ENCODE measurements at regions of chr13 and their contacts with region 1.

Region 1: DNA sequence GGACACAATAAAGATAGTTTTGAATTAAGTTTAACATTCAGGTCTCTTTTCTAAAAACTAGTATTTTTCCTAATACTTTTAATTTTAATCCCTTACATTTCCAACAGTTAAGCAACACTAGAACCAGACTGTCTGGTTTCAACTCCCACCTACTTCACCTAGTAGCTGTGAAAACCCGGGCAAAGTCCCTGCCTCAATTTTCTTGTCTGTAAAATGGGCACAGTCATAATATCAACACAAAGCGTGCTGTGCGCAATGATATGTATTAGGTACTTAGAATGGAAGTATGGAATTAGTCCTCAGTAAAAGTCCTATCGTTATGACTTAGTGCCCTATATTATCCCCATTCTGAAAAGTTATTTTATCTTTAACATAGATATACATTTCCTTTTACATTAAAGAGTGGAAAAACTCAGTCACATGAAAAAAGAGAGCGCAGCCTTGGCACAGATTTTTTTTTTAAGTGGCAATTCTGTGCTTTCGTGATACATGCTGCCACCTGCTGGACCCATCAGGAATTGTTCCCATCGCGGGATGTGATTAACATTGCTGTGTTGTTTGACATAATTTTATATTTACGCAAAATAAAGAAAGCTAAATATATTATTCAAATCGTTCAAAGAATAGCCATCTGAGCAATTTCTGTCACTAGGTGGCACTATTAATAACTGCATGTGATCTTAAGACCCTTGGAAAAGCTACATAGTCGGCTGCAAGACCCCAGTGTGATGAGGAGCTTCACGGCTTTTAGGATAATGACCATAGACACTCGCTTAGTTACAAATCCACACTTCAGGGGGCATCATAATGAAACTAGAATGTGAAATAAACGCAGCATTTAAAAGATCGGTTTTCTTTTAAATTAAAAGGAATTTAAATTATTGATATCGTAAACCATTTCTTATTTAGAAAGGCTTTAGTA is 59.9 kb downstream of the LIG4 start:
- DNase-seq: peak in 1 of 2 donors; percentile 46
- ATAC-seq: no peak
- H3K4me3 ChIP-seq: no peak overlapping the region
- H3K27ac ChIP-seq: no peak overlapping the region
- H3K4me1 ChIP-seq: no peaks in the 10 kb centered on the region
- H3K27me3 ChIP-seq: peaks cover 0 to 1% of the 10 kb centered on the region in 2 donors

Region 2: GRCh38 chr13:107205303-107206104 is 949.9 kb before region 1 on chr13:
- intact Hi-C with region 1: loop called (anchors 2 to 5 kb)
- DNase-seq: peak; percentile 67 to 89
- ATAC-seq: no peak
- H3K4me3 ChIP-seq: no peak overlapping the region
- H3K27ac ChIP-seq: no peak overlapping the region
- H3K4me1 ChIP-seq: no peaks in the 10 kb centered on the region
- H3K27me3 ChIP-seq: peaks cover 0 to 2% of the 10 kb centered on the region in 2 donors

Region 3: GRCh38 chr13:107211073-107211472 is 944.4 kb before region 1 on chr13:
- intact Hi-C with region 1: loop called (anchors 2 to 5 kb)
- DNase-seq: peak; percentile 73 to 85
- ATAC-seq: peak; percentile 87
- H3K4me3 ChIP-seq: no peak overlapping the region
- H3K27ac ChIP-seq: no peak overlapping the region
- H3K4me1 ChIP-seq: no peaks in the 10 kb centered on the region
- H3K27me3 ChIP-seq: no peaks in the 10 kb centered on the region

Region 4: DNA sequence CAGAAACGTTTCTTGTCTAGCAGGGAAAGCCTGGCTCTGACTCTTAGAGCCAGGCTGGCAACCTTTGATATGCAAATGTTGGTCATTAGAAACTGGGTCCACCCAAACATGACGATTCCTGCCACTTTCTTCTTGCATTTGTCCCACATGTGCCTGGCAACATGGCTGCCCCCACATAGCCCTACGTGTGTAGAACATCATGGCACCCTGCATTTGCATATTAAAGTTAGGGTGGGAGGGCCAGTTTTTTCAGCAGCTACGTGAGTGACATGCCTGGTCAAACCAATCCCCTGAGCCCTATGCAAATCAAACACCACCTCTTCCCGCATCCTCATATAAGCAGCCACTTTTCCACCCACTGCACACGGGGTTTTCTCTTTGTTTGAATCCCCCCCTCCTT is 35.1 kb before region 1 on chr13:
- intact Hi-C with region 1: no loop called
- DNase-seq: no peak
- ATAC-seq: no peak
- H3K4me3 ChIP-seq: no peak overlapping the region
- H3K27ac ChIP-seq: no peak overlapping the region
- H3K4me1 ChIP-seq: no peaks in the 10 kb centered on the region
- H3K27me3 ChIP-seq: no peaks in the 10 kb centered on the region

Region 5: DNA sequence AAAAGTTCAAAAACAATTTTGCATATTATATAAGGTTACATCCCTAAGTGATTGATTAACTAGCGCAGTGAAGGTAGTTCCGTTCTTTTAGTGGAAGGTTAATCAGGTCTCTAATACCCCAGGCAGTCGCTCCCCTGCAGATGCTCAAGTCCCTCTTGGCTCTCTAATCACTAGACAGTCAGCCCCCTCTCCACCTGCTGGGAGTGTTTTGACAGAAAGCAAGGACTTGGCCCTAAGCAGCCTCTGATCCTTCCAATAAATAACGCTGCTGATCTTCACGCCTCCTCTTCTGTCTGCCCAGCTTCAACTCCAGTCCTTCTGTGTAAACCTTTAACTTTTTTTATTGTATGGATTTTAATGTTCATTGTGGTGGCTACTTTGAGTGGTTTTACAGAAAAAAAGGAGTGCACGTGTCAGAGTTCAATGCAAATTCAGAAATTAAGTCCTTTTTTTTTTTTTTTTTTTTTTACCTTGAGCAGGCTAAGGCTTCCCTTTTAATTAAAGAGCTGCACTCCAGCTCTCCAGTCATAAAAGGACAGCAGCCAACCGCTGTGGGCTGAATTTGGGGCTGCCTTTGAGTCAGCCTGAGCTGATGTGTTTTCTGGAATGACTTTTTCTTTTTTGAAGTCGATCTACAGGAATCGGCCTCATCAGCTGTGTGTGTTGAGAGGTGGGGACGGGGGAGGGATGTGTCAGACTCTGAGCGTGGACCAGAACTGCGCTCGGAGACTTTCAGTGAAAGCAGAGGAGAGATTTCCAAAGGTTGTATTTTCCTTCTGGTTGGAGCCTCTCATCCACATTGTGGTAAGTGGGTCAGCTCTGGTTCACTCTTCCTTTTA is 440.2 kb after region 1 on chr13:
- intact Hi-C with region 1: no loop called
- DNase-seq: no peak
- ATAC-seq: no peak
- H3K4me3 ChIP-seq: no peak overlapping the region
- H3K27ac ChIP-seq: no peak overlapping the region
- H3K4me1 ChIP-seq: no peaks in the 10 kb centered on the region
- H3K27me3 ChIP-seq: peaks cover 0 to 2% of the 10 kb centered on the region in 2 donors